GM12878 (cell line): ENCODE measurements at regions of chr10 and their contacts with region 1.

Region 1: GRCh38 chr10:112721080-112721698 is 228.9 kb upstream of the TCF7L2 start:
- DNase-seq: peak; percentile 21
- ATAC-seq: peak; percentile 94
- H3K4me3 ChIP-seq: no peak overlapping the region
- H3K27ac ChIP-seq: no peak overlapping the region
- H3K4me1 ChIP-seq: no peaks in the 10 kb centered on the region
- H3K27me3 ChIP-seq: no peaks in the 10 kb centered on the region
- CTCF ChIP-seq: peak; percentile 69 to 72 (median 69)
- EP300 ChIP-seq: no peak
- POLR2A ChIP-seq: no peak
- RAD21 ChIP-seq: peak; percentile 49; the same call in 1 of the 2 replicates

Region 2: DNA sequence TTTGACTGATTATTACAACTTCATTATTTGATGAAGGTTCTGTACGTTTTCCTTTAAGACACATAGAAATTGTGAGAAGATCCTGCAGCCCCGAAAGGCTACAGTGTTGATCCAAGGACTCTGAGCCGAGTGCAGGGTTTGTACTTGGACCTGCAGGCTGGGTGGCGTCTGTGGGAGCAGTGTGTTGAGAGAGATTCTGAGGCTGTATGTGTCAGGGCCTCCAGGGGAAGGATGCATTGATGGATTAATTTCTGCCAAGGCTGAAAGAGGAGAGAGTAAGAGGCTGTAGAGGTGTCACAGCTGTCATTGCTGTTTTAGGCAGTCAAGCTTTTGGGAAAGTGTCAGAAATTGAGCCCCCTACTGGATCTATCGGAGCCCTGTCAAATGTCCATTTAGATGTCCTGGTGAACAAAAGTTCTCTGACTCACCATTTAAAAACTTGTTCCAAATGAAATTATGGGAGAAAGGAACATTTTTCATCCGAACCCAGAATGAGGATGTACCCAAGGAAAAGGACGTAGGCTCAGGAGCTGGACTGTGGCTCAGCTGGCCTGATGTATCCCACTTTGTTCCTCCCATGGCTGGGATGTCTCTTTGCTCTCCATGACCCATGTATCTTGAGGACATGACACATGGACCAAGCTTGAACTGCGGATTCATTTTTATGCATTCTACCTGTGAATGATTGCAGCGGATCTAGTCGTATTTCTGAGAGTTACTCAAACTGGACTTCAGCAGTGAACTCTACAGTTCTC is 331.1 kb after region 1 on chr10:
- CTCF ChIA-PET with region 1: interaction called, 3 read pairs
- POLR2A ChIA-PET with region 1: no interaction called
- RAD21 ChIA-PET with region 1: no interaction called
- SMC1A ChIA-PET with region 1: no interaction called
- in situ Hi-C with region 1: no loop called
- intact Hi-C with region 1: loop called (anchors 10 kb)
- DNase-seq: no peak
- ATAC-seq: no peak
- H3K4me3 ChIP-seq: no peak overlapping the region
- H3K27ac ChIP-seq: no peak overlapping the region
- H3K4me1 ChIP-seq: no peaks in the 10 kb centered on the region
- H3K27me3 ChIP-seq: peaks cover 0 to 3% of the 10 kb centered on the region in 2 experiments; a peak in 1 of 4 replicates
- CTCF ChIP-seq: 0 out of 6 replicates have a peak, but pooled peaks of 1 of the 3 experiments have one; percentile 2
- EP300 ChIP-seq: no peak
- POLR2A ChIP-seq: no peak
- RAD21 ChIP-seq: no peak

Region 3: GRCh38 chr10:113126229-113127201 is 405.3 kb after region 1 on chr10:
- CTCF ChIA-PET with region 1: interaction called, 3 read pairs
- POLR2A ChIA-PET with region 1: no interaction called
- RAD21 ChIA-PET with region 1: no interaction called
- SMC1A ChIA-PET with region 1: no interaction called
- in situ Hi-C with region 1: no loop called
- intact Hi-C with region 1: loop called (anchors 5 kb)
- DNase-seq: no peak
- ATAC-seq: peak; percentile 74
- H3K4me3 ChIP-seq: no peak overlapping the region
- H3K27ac ChIP-seq: no peak overlapping the region
- H3K4me1 ChIP-seq: no peaks in the 10 kb centered on the region
- H3K27me3 ChIP-seq: peaks cover 0 to 5% of the 10 kb centered on the region in 2 experiments; a peak in 2 of 4 replicates
- CTCF ChIP-seq: peak in 2 of 3 experiments; percentile 24 to 33; a peak in 1 of 6 replicates
- EP300 ChIP-seq: no peak
- POLR2A ChIP-seq: no peak
- RAD21 ChIP-seq: peak; percentile 40; the same call in 1 of the 2 replicates

Region 4: DNA sequence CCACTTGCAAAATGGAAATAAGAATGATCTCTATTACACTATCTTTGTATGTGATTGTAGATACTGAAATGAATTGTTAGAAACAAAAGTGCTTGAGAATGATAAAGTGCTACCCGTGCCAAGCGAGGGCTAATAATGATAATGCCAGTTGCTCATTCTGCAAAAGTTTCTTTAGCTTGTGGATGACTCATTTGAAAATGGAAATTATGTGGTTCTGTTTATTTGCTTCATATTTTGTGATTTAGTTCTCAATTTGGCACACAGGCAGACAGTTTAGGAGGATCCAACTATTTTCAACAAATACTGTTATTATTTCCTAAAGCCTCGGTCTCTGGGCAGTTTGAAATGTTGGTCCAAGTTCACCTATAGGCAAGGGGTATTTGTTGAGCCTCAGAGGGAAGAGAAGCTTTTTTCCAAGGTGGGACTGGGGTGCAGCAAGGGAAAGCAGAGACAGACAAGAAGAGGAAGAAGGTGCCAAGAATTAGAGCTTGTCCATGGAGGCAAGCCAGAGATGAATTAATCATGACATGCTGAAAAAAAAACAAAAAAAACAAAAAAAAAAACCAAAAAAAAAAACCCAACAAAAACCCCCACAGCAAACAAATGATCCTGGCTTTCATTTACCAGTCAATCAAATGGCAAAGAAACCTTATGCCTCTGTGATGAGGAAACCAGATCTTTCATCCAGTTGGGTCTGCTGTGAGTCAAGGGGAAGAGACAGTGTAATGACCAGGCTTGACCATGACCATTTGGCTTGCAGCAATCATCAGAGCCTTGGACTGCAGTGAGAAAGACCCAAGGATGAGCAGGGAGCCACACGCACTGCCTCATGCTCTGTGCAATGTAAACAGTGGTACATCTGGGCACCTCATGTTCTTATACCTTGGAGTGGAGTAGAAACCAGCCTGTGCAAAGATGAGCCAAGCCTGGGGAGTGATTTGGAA is 546.7 kb after region 1 on chr10:
- CTCF ChIA-PET with region 1: no interaction called
- POLR2A ChIA-PET with region 1: no interaction called
- RAD21 ChIA-PET with region 1: no interaction called
- SMC1A ChIA-PET with region 1: no interaction called
- in situ Hi-C with region 1: no loop called
- intact Hi-C with region 1: loop called (anchors 10 kb)
- DNase-seq: no peak
- ATAC-seq: no peak
- H3K4me3 ChIP-seq: no peak overlapping the region
- H3K27ac ChIP-seq: no peak overlapping the region
- H3K4me1 ChIP-seq: no peaks in the 10 kb centered on the region
- H3K27me3 ChIP-seq: no peaks in the 10 kb centered on the region; a peak in 1 of 4 replicates
- CTCF ChIP-seq: no peak
- EP300 ChIP-seq: no peak
- POLR2A ChIP-seq: no peak
- RAD21 ChIP-seq: no peak

Region 5: DNA sequence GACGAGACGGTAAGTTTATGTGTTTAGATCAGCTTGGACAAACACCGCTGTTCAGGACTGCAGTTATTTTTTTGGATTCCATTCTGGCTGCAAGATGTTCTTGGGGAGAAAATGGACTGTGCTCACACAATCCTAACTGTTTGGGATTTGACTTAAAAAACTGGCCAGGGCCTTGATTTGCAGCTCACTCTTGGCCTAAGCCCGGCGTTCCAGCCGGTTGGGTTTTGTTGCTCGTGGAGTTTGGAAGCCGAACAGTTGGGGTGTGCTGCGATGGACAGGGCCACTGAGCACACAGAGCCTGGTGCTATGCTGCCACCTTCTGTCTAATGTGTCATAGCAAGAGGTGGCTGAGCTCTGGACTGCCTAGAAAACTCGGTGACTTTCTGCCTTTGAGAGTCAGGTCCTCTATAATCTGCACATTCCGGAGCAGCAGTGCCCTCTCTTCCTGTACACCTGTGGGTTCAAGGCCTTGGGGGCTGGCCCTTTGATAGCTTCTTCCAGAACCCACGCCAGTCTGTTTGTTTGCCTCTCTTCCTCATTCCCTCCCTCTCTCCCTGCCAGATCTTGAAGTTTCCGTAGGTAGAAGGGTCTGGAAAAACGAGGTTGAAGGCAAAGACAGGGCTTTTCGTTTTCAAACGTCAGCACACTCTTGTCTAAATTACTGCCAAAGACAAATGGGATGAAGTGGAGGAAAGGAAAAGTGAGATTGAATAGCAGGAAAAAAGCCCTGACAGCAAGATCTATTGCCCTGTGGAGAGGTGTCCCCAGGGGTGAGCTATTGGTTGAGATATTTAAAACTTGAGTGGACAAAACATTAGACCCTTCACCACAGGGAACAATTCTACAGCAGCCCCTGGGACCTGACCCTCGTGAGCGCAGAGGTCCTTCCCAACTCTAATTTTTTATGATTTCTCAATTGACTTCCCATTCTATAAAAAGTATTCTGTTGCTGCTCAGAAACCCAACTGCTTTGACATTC is 664.1 kb after region 1 on chr10:
- CTCF ChIA-PET with region 1: interaction called, 8 read pairs
- POLR2A ChIA-PET with region 1: no interaction called
- RAD21 ChIA-PET with region 1: interaction called, 5 read pairs
- SMC1A ChIA-PET with region 1: interaction called, 3 read pairs
- in situ Hi-C with region 1: loop called (anchors 10 kb)
- intact Hi-C with region 1: loop called (anchors 1 kb)
- DNase-seq: no peak
- ATAC-seq: peak; percentile 98
- H3K4me3 ChIP-seq: no peak overlapping the region
- H3K27ac ChIP-seq: no peak overlapping the region
- H3K4me1 ChIP-seq: no peaks in the 10 kb centered on the region
- H3K27me3 ChIP-seq: peaks cover 0 to 4% of the 10 kb centered on the region in 2 experiments; a peak in 2 of 4 replicates
- CTCF ChIP-seq: peak; percentile 72 to 82 (median 73); a peak in 5 of 6 replicates
- EP300 ChIP-seq: no peak
- POLR2A ChIP-seq: no peak
- RAD21 ChIP-seq: peak; percentile 87

Region 6: GRCh38 chr10:113521123-113521795 is 800.1 kb after region 1 on chr10:
- CTCF ChIA-PET with region 1: no interaction called
- POLR2A ChIA-PET with region 1: no interaction called
- RAD21 ChIA-PET with region 1: no interaction called
- SMC1A ChIA-PET with region 1: no interaction called
- in situ Hi-C with region 1: no loop called
- intact Hi-C with region 1: loop called (anchors 10 kb)
- DNase-seq: no peak
- ATAC-seq: peak; percentile 83
- H3K4me3 ChIP-seq: no peak overlapping the region
- H3K27ac ChIP-seq: no peak overlapping the region
- H3K4me1 ChIP-seq: no peaks in the 10 kb centered on the region
- H3K27me3 ChIP-seq: no peaks in the 10 kb centered on the region; a peak in 1 of 4 replicates
- CTCF ChIP-seq: peak; percentile 87 to 97 (median 94)
- EP300 ChIP-seq: no peak
- POLR2A ChIP-seq: no peak
- RAD21 ChIP-seq: peak; percentile 76

Region 7: DNA sequence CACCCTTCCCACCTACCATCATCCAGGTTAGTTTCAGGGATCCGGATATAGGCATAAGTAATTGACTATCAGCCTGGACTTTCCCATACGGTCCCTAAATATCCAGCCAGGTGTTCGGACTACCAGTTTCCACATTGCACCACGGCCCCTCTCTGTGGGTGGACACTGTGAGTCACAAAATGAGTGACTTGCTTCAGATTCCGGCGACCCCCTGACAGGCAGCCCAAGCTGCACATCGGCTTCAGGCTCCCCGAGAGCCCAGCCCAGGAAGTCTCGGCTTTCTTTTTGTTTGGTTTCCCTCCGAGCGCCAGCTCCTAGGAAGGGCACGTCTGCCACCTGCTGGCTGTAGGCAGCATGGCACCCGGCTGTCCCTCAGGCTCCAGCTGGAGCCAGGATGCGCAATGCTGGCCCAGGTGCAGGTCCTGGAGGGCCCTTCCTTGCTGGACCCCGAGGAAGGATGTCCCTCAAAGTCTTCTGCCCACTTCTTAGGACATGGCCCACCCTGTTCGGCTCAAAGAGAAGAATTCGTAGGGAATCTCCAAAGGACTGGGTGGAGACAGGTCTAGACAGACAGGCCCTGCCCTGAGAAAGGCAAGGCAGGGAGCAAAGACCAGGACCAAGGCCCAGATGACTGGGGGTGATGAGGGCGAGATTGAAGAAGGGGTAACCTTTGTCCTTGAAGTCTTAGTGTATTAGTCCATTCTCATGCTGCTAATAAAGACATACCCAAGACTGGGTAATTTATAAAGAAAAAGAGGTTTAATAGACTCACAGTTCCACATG is 842.3 kb after region 1 on chr10:
- CTCF ChIA-PET with region 1: no interaction called
- POLR2A ChIA-PET with region 1: no interaction called
- RAD21 ChIA-PET with region 1: no interaction called
- SMC1A ChIA-PET with region 1: no interaction called
- in situ Hi-C with region 1: no loop called
- intact Hi-C with region 1: loop called (anchors 10 kb)
- DNase-seq: no peak
- ATAC-seq: peak; percentile 97
- H3K4me3 ChIP-seq: no peak overlapping the region
- H3K27ac ChIP-seq: no peak overlapping the region
- H3K4me1 ChIP-seq: no peaks in the 10 kb centered on the region
- H3K27me3 ChIP-seq: peaks cover 0 to 2% of the 10 kb centered on the region in 2 experiments; a peak in 2 of 4 replicates
- CTCF ChIP-seq: peak; percentile 87 to 99 (median 98)
- EP300 ChIP-seq: no peak
- POLR2A ChIP-seq: no peak
- RAD21 ChIP-seq: peak; percentile 82